ENCODE measurements at regions of chr5 and their contacts with region 1.

Region 1: GRCh38 chr5:177454397-177455035 is 7.9 kb downstream of the PRR7 start:
- DNase-seq: peak; percentile 100
- H3K27ac ChIP-seq: peak overlapping the region; percentile 84
- CTCF ChIP-seq: peak; percentile 96

Region 2: DNA sequence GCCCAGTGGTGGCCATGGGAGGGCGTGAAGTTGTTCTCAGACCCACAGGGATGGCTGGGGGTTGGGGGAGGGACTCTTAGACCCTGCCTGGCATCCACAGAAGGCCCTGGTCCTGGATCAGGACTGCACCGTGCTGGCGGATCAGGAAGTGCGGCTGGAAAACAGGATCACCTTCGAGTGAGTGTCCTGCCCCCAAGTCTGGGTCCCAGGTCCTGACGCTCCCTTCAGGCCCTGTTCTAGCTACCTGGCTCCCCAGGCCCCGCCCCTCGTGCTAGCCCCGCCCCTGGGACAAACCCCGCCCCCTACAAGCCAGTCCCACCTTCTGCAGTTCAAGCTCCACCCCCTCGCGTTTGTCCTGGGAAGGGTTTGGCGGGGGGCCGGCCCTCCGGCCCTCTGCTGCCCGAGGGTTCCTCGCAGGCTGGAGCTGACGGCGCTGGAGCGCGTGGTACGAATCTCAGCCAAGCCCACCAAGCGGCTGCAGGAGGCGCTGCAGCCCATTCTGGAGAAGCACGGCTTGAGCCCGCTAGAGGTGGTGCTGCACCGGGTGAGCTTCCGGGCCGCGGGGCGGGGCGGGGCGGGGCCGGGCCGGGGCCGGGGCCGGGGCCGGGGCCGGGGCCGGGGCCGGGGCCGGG is 83.9 kb before region 1 on chr5:
- CTCF ChIA-PET with region 1: interaction called, 15 read pairs
- POLR2A ChIA-PET with region 1: no interaction called
- DNase-seq: peak; percentile 96
- H3K27ac ChIP-seq: peak overlapping the region; percentile 89
- CTCF ChIP-seq: peak; percentile 87

Region 3: GRCh38 chr5:177390363-177391300 is 63.9 kb before region 1 on chr5:
- CTCF ChIA-PET with region 1: interaction called, 39 read pairs
- POLR2A ChIA-PET with region 1: interaction called, 3 read pairs
- DNase-seq: peak; percentile 94
- H3K27ac ChIP-seq: peak overlapping the region; percentile 99
- CTCF ChIP-seq: peak; percentile 98

Region 4: DNA sequence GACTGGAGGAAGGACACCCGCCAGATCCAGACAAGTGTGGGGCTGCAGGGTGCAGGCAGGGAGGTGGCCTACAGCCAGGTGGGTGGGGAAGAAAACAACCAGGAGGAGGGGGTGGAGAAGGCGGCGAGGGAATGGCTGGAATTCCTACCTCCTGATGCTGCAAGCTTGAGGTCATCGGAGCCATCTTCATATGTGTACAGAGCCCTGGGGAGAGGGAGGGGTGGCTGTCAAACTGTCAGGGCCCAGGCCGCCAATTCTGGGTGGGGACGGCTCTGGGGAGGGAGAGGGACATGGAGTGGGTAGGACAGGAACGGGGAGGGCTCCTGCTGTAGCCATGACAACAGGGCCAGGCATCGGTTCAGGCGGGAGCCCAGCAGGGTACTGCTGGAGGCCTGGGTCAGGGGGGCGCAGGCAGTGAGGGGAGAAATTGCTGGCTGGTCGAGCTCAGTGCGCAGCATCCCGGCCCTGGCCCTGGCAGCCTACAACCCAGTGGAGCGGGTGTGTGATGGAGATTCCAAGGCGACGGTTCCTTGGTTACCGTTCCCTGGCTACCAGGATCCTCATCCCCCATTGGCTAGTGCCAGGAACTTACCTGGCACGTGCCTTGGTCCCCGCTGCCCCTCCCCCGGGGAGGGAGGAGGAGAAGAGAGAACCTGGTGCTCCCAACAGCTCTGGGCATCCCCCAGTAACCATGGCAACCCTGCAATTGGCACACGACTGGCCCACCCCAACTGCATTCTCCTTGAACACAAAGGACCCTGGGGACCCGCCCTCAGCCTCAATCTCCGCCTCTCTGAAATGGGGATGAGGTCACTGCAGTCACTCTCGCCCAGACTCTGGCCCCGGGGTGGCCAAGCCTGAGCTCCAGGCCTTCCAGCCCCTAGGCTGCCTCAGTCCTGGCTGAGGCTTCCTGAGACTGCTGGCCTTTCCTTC is 14.4 kb after region 1 on chr5:
- CTCF ChIA-PET with region 1: interaction called, 18 read pairs
- POLR2A ChIA-PET with region 1: interaction called, 4 read pairs
- DNase-seq: peak; percentile 75
- H3K27ac ChIP-seq: peak overlapping the region; percentile 82
- CTCF ChIP-seq: no peak

Region 5: DNA sequence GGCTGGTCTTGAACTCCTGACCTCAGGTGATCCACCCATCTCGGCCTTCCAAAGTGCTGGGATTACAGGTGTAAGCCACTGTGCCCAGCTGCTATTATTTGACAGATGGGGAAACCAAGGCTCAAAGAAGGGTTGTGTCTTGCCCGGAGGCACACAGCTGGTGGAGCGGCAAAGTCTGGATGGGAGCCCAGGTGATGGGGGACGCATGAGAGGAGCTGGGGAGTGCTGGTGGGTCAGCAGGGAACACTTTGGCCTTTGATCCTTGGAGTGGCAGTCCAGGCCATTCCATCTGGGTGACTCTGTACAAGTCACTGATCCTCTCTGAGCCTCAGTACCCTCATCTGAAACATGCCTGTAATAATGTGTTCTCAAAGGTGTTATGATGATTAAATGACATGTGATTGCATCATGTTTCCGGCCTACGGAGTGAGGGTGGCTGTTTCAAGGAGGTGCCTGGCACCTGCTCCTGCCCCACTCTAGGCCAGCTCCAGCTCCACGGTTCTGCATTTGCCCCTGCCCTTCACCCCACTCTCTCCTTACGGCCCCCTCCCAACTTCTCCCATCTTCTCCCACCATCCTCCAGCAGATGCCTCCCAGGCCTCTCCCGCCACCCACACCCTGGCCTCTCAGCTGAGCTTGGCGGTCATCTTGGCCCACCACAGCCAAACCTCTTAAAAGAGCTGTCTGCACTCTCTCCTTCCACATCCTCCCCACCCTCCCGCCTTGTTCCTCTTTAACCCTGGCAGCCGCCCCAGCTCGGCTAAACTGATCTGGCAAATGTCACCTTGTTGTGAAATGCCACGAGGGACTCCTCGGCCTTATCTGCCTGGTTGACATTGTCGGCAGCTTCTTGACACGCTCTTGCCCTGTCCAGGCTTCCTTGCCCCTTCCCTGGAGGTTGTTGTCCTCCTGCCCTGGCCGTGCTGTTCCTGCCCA is 24.5 kb after region 1 on chr5:
- CTCF ChIA-PET with region 1: interaction called, 10 read pairs
- POLR2A ChIA-PET with region 1: no interaction called
- DNase-seq: no peak
- H3K27ac ChIP-seq: peak overlapping the region; percentile 82
- CTCF ChIP-seq: no peak

Region 6: DNA sequence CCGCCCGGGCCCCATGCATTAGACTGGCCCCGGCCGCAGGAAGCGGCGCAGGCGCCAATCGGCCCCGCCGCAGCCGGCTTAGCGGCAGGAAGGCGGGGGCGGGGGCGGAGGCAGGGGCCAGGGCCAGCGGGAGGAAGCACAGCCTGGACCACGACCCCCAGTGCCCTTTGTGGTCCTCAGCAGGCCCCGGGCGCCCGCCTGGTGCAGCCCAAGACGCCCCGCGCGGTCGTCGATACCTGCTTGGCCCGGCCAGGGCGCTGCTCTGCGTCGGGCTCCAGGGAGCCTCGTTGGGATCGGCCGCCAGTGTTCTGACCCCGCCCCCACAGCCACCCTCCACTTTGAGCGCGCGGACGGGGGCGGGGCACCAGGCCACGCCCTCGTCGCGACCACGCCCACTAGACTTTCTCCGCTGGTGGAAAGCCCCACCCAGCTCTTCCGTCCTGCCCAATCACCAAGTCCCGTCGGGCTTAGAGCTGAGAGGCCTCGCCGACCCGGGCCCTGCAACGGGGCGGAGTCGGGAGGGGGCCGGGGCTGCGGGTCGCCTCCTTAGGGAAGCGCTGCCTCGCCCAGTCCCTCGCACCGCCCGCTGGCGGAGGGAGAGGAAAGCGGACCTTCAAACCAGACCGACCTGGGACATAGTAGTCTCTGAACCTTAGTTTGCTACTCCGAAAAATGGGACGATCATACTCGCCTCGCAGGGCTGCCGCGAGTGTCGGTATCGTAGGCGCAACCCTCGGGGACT is 42.9 kb after region 1 on chr5 and contains the start of gene PDLIM7:
- CTCF ChIA-PET with region 1: interaction called, 13 read pairs
- POLR2A ChIA-PET with region 1: no interaction called
- DNase-seq: peak; percentile 99
- H3K27ac ChIP-seq: peak within 1 kb of the TSS; percentile 96
- CTCF ChIP-seq: no peak; the same call in 1 of the 2 replicates

Measured in RWPE1 (cell line).